ENCODE measurements at regions of chr22 and their contacts with region 1.

Region 1: GRCh38 chr22:40509401-40510134 is 127.0 kb downstream of the MRTFA start:
- DNase-seq: peak; percentile 61
- H3K4me3 Mint-ChIP-seq: peak overlapping the region; percentile 42
- H3K27ac Mint-ChIP-seq: peak overlapping the region; percentile 8
- H3K4me1 Mint-ChIP-seq: peaks cover 52% of the 10 kb centered on the region
- H3K27me3 Mint-ChIP-seq: no peaks in the 10 kb centered on the region
- CTCF ChIP-seq: no peak

Region 2: GRCh38 chr22:40597526-40598430 is 88.2 kb after region 1 on chr22:
- CTCF ChIA-PET with region 1: no interaction called
- intact Hi-C with region 1: no loop called
- DNase-seq: no peak
- H3K4me3 Mint-ChIP-seq: no peak overlapping the region
- H3K27ac Mint-ChIP-seq: no peak overlapping the region
- H3K4me1 Mint-ChIP-seq: peaks cover 60% of the 10 kb centered on the region
- H3K27me3 Mint-ChIP-seq: no peaks in the 10 kb centered on the region
- CTCF ChIP-seq: no peak

Region 3: DNA sequence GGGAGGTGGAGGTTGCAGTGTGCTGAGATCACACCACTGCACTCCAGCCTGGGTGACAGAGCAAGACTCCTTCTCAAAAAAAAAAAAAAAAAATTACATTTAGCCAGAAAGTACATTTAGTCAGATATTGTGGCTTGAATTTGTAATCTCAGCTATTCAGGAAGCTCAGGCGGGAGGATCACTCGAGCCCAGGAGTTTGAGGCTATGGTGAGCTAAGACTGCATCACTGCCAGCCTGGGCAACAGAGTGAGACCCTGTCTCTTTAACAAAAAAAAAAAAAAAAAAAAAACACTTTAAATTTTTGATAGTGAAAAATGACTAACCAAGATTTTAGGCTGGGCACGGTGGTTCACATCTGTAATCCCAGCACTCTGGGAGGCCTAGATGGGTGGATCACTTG is 99.6 kb after region 1 on chr22:
- CTCF ChIA-PET with region 1: interaction called, 11 read pairs
- intact Hi-C with region 1: no loop called
- DNase-seq: no peak
- H3K4me3 Mint-ChIP-seq: no peak overlapping the region
- H3K27ac Mint-ChIP-seq: no peak overlapping the region
- H3K4me1 Mint-ChIP-seq: peaks cover 48% of the 10 kb centered on the region
- H3K27me3 Mint-ChIP-seq: no peaks in the 10 kb centered on the region
- CTCF ChIP-seq: no peak

Region 4: DNA sequence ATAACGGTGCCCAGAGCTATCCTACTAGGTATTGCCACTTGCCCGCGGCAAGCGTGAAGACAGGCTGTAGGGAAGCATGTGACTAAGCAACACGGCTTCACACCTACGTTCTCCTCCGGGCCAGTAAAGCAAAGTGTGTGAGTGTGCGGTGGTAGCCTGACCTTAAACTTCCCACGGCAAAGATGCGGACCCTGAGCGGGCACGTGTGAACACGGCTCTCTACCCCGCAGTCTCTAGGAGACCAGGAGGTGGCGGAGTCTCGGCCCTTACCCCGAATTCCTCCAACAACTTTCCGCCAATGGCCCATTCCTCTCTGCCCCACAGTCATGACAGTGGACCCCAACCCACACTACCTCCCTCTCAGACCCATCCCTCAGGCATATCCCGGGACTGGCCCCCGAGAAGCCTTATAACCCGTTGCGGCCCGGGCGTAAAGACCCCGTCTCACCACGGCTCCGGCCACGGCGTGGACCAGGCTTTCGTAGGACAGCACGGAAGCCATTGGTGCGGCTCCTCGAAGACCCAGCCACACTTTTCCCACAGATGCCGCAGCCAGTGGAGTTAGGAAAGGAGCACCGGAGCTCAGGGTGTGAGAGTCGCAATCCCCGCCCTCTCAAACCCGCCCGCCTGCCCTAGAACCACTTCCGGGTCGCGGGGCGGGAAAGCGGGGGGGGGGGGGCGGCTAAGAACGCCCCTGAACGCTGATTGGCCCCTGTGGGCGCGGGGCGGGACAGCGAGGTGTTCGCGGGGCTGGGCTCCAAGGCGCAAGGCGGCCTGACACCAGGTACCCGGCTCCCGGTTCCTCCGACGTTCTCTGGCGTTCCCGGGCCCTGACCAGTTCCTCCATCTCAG is 309.4 kb after region 1 on chr22 and contains the start of gene SLC25A17:
- CTCF ChIA-PET with region 1: no interaction called
- intact Hi-C with region 1: no loop called
- DNase-seq: peak; percentile 91
- H3K4me3 Mint-ChIP-seq: peak within 1 kb of the TSS; percentile 91
- H3K27ac Mint-ChIP-seq: peak within 1 kb of the TSS; percentile 63
- H3K4me1 Mint-ChIP-seq: peaks cover 25% of the 10 kb centered on the region
- H3K27me3 Mint-ChIP-seq: no peaks in the 10 kb centered on the region
- CTCF ChIP-seq: peak; percentile 30
- total RNA-seq, gene SLC25A17: 20.7 and 24.3 TPM in 2 replicates

Measured in Calu3 (cell line).